ENCODE measurements at regions of chr12 and their contacts with region 1.

Region 1: GRCh38 chr12:7219599-7220243 is 30.2 kb downstream of the PEX5 start:
- DNase-seq: peak; percentile 77 to 80
- H3K4me3 ChIP-seq: no peak overlapping the region
- H3K27ac ChIP-seq: no peak overlapping the region
- H3K4me1 ChIP-seq: no peaks in the 10 kb centered on the region
- H3K27me3 ChIP-seq: no peaks in the 10 kb centered on the region
- CTCF ChIP-seq: peak; percentile 49 to 88 (median 84)
- POLR2A ChIP-seq: no peak

Region 2: GRCh38 chr12:7188562-7189397 is 30.9 kb before region 1 on chr12:
- intact Hi-C with region 1: no loop called
- DNase-seq: peak; percentile 69 to 70
- H3K4me3 ChIP-seq: peak overlapping the region; percentile 59 to 94 (median 74)
- H3K27ac ChIP-seq: peak overlapping the region; percentile 81 to 94 (median 92)
- H3K4me1 ChIP-seq: peaks cover 4 to 21% of the 10 kb centered on the region in 2 donors
- H3K27me3 ChIP-seq: no peaks in the 10 kb centered on the region
- CTCF ChIP-seq: peak in 5 of 6 experiments; percentile 43 to 62 (median 53)
- POLR2A ChIP-seq: peak in 1 of 2 donors; percentile 4

Region 3: DNA sequence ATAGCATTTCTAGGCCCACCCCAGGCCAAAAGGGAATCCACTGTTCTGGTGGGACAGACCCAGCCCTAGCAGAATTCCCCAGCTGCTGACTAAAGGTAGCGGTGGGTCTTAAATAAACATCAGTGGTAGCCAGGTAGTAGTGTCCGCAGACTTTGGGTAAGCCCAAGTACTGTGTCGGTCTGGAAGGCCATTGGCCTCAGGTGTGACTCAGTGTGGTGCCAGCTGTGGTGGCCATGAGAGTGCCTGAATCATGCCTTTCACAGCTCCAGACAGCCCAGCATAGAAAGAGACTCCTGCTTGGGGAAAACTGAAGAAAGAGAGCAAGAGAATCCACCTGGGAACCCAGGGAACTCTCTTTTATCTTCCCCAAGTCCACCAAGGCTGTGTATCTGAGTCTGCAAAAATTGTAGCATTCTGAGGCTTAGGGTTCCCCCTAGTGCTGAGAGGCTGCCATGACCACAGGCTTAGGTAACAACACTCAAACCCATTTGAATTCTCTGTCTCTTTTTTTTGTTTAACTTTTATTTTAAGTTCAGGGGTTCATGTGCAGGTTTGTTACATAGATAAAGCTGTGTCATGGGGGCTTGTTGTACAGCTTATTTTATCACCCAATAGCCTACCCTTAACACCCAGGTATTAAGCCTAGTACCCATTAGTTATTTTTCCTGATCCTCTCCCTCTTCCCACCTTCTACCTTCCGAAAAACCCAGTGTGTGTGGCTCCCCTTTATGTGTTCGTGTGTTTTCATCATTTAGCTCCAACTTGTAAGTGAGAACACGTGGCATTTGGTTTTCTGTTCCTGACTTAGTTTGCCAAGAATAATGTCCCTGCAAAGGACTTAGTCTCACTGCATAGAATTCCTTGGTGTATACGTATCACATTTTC is 240.9 kb after region 1 on chr12:
- intact Hi-C with region 1: loop called (anchors 5 kb)
- DNase-seq: peak; percentile 13 to 40
- H3K4me3 ChIP-seq: no peak overlapping the region
- H3K27ac ChIP-seq: no peak overlapping the region
- H3K4me1 ChIP-seq: no peaks in the 10 kb centered on the region
- H3K27me3 ChIP-seq: no peaks in the 10 kb centered on the region
- CTCF ChIP-seq: peak; percentile 41 to 74 (median 62)
- POLR2A ChIP-seq: no peak

Region 4: GRCh38 chr12:7638760-7639555 is 419.2 kb after region 1 on chr12:
- intact Hi-C with region 1: loop called (anchors 5 kb)
- DNase-seq: peak; percentile 78 to 80
- H3K4me3 ChIP-seq: no peak overlapping the region
- H3K27ac ChIP-seq: no peak overlapping the region
- H3K4me1 ChIP-seq: no peaks in the 10 kb centered on the region
- H3K27me3 ChIP-seq: no peaks in the 10 kb centered on the region
- CTCF ChIP-seq: peak; percentile 65 to 96 (median 87)
- POLR2A ChIP-seq: no peak

Measured in thyroid gland (tissue), 4 donors.